Activated CD8-positive, alpha-beta memory T cell treated with anti-CD3 and anti-CD28 coated beads, Interleukin-2, amount 10 ng/mL, durations not matched to agents 7 days and 5 days (primary cell): ENCODE measurements at regions of chr17 and their contacts with region 1.

Region 1: DNA sequence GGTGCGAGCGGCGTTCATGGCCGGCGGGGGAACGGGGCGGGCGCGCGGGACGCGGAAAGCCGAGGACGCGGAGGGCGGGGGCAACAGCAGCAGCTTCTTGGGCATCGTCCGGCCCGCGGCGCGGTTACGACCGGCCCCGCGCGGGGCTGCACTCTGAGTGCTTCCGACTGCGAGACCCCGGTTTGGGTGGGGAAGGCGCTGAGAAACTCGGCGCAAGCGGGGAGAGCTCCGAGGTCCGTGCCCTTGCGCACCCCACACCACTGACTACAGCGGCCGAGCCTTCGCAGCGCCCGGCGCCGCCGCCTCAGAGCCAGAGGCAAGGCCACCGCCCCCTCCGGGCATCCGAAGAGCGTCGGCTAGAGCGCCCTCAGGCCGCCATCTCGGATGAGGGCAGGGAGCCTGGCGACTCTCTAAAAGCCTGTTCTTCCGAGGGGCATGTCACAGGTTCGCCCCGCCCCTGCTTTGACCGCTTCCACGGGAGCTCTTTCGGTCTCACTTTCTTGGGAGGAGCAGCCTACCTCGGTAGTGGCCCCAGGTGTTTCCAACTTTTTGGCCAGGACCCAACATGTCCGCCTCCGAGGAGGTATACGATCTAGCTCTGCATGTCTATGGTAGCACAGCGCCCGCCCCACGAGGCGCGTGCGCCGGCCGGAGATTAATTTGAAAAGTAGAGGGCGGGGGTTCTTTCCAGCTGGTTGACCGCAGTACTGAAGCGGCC is at the start of gene PRPSAP1:
- DNase-seq: peak; percentile 90
- ATAC-seq: peak; percentile 95
- H3K4me3 Mint-ChIP-seq: peak within 1 kb of the TSS; percentile 98
- H3K27ac Mint-ChIP-seq: peak within 1 kb of the TSS; percentile 99
- H3K4me1 Mint-ChIP-seq: peaks cover 34% of the 10 kb centered on the region
- H3K27me3 Mint-ChIP-seq: no peaks in the 10 kb centered on the region
- total RNA-seq, gene PRPSAP1: 63.9 to 64.7 TPM

Region 2: DNA sequence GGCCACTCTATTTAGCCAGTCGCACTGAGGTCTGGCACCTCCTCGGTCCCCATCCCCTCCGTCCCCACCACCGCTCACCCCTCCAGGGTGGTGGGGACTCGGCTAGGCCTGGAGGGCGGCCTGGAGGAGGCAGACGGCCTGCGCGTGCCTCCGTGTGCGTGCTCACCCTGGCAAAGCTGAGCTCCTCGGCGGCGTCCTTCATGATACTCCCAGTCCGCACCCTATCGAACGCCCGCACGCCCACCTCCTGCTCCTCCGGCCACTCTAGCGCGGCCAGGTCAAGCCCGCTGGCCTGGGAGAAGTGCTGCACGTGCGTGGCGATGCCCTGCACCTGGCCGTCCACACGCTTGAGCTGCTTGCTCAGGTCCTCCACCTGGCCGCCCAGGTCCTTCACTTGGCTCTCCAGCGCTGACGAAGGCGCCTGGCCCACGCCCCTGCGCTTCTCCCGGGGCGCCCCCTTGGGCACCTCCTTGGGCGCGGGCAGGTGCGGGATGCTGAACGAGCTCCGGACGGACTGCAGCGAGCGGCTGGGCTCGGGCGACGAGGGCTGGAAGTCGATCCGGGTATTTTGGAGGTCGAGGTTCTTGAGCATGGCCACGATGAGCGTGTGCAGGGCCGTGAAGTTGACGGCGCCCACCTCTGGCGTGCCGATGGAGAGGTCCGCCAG is 46.3 kb before region 1 on chr17:
- CTCF ChIA-PET with region 1: interaction called, 10 read pairs
- DNase-seq: no peak
- ATAC-seq: no peak
- H3K4me3 Mint-ChIP-seq: no peak overlapping the region
- H3K27ac Mint-ChIP-seq: no peak overlapping the region
- H3K4me1 Mint-ChIP-seq: peaks cover 2% of the 10 kb centered on the region
- H3K27me3 Mint-ChIP-seq: no peaks in the 10 kb centered on the region

Region 3: GRCh38 chr17:76331083-76331482 is 22.7 kb before region 1 on chr17:
- CTCF ChIA-PET with region 1: interaction called, 10 read pairs
- DNase-seq: no peak
- ATAC-seq: no peak
- H3K4me3 Mint-ChIP-seq: no peak overlapping the region
- H3K27ac Mint-ChIP-seq: no peak overlapping the region
- H3K4me1 Mint-ChIP-seq: no peaks in the 10 kb centered on the region
- H3K27me3 Mint-ChIP-seq: no peaks in the 10 kb centered on the region

Region 4: DNA sequence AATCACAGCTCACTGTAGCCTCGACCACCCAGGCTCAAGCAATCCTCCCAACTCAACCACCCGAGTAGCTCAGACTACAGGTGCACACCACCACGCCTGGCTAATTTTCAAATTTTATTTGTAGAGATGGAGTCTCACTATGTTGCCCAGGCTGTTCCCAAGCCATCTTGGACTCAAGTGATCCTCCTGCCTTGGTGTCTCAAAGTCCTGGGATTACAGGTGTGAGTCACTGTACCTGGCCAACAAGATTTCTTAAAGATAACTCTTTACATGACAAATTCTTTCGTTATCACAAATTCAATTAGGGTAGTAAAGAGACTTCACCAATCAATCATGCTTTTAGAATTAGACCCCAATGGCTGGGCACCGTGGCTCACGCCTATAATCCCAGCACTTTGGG is 12.5 kb before region 1 on chr17:
- CTCF ChIA-PET with region 1: no interaction called
- DNase-seq: no peak
- ATAC-seq: no peak
- H3K4me3 Mint-ChIP-seq: no peak overlapping the region
- H3K27ac Mint-ChIP-seq: no peak overlapping the region
- H3K4me1 Mint-ChIP-seq: peaks cover 6% of the 10 kb centered on the region
- H3K27me3 Mint-ChIP-seq: no peaks in the 10 kb centered on the region